Heart right ventricle (tissue), 16 donors: ENCODE measurements at regions of chrX and their contacts with region 1.

Region 1: DNA sequence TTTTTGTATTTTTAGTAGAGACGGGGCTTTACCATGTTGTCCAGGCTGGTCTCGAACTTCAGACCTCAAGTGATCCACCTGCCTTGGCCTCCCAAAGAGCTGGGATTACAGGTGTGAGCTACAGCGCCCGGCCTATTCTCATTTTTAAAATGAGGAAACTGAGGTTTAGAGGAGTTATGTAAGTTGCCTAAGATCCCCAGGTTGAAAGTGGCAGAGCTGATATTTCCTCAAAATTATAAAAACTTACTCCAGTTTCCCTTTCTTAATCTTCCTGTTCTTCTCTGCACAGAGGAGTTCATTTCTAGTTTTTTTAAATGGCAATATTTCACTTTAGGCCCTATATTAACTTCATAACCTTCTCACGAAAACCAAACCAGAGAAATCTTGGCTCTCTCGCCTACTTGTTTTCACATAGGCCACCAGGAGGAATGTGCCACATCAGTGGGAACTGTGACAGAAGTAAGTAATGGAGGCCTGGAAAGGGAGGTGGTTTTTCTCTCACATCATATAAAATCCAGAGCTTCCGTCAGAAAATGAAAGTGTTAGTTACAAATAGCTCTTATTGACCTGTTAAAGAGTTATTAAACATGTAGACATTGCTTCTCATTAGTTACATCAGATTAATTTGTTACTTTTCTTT is 16.1 kb upstream of the RS1 start:
- DNase-seq: no peak
- ATAC-seq: no peak
- H3K4me3 ChIP-seq: no peak overlapping the region
- H3K27ac ChIP-seq: no peak overlapping the region
- H3K4me1 ChIP-seq: no peaks in the 10 kb centered on the region
- H3K27me3 ChIP-seq: no peaks in the 10 kb centered on the region
- CTCF ChIP-seq: no peak

Region 2: GRCh38 chrX:18833071-18833731 is 145.2 kb after region 1 on chrX:
- intact Hi-C with region 1: loop called in 1 of 10 experiments (anchors 5 kb)
- DNase-seq: peak; percentile 27 to 38
- ATAC-seq: peak; percentile 89 to 97 (median 94)
- H3K4me3 ChIP-seq: peak overlapping the region in 6 of 10 donors; percentile 5 to 34 (median 21)
- H3K27ac ChIP-seq: peak overlapping the region; percentile 22 to 78 (median 64)
- H3K4me1 ChIP-seq: no peaks in the 10 kb centered on the region
- H3K27me3 ChIP-seq: peaks cover 0 to 8% (median 0%) of the 10 kb centered on the region in 7 donors
- CTCF ChIP-seq: no peak